ENCODE measurements at regions of chr14 and their contacts with region 1.

Region 1: GRCh38 chr14:34714320-34715126 is at the start of gene CFL2:
- DNase-seq: peak; percentile 54
- H3K4me3 Mint-ChIP-seq: peak within 1 kb of the TSS; percentile 86
- H3K27ac Mint-ChIP-seq: peak within 1 kb of the TSS; percentile 95
- H3K4me1 Mint-ChIP-seq: peaks cover 26% of the 10 kb centered on the region
- H3K27me3 Mint-ChIP-seq: no peaks in the 10 kb centered on the region
- CTCF ChIP-seq: no peak
- total RNA-seq, gene CFL2: 39.7 and 53.7 TPM in 2 replicates

Region 2: GRCh38 chr14:34554540-34555333 is 159.8 kb before region 1 on chr14:
- CTCF ChIA-PET with region 1: no interaction called
- POLR2A ChIA-PET with region 1: no interaction called
- intact Hi-C with region 1: loop called (anchors 5 kb)
- DNase-seq: peak; percentile 12
- H3K4me3 Mint-ChIP-seq: peak overlapping the region; percentile 62
- H3K27ac Mint-ChIP-seq: peak overlapping the region; percentile 44
- H3K4me1 Mint-ChIP-seq: peaks cover 10% of the 10 kb centered on the region
- H3K27me3 Mint-ChIP-seq: no peaks in the 10 kb centered on the region
- CTCF ChIP-seq: no peak

Region 3: GRCh38 chr14:34671716-34672115 is 42.8 kb before region 1 on chr14:
- CTCF ChIA-PET with region 1: interaction called, 40 read pairs
- POLR2A ChIA-PET with region 1: interaction called, 4 read pairs
- intact Hi-C with region 1: loop called (anchors 5 kb)
- DNase-seq: no peak
- H3K4me3 Mint-ChIP-seq: no peak overlapping the region
- H3K27ac Mint-ChIP-seq: no peak overlapping the region
- H3K4me1 Mint-ChIP-seq: no peaks in the 10 kb centered on the region
- H3K27me3 Mint-ChIP-seq: no peaks in the 10 kb centered on the region
- CTCF ChIP-seq: no peak

Region 4: DNA sequence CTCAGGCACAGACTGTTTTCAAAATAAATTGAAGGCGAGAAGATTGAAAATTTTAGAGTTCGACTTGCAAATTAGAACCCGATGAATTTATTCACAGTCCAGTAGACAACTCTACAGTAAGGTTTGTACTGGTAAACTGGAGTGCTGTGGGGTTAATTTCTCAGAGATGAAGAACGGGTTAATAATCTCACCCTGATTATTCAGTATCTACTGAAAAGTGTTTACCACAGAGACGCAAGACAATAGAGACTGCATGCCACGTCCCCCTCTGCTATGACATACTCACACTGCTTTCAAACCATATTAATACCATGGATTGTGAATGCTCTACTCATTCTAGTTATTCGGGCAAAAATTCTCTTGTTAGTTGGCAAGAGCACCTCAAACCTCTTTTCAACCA is 36.2 kb before region 1 on chr14:
- CTCF ChIA-PET with region 1: interaction called, 40 read pairs
- POLR2A ChIA-PET with region 1: interaction called, 4 read pairs
- intact Hi-C with region 1: loop called (anchors 5 kb)
- DNase-seq: no peak
- H3K4me3 Mint-ChIP-seq: peak overlapping the region; percentile 7
- H3K27ac Mint-ChIP-seq: peak overlapping the region; percentile 56
- H3K4me1 Mint-ChIP-seq: peaks cover 10% of the 10 kb centered on the region
- H3K27me3 Mint-ChIP-seq: no peaks in the 10 kb centered on the region
- CTCF ChIP-seq: no peak

Region 5: DNA sequence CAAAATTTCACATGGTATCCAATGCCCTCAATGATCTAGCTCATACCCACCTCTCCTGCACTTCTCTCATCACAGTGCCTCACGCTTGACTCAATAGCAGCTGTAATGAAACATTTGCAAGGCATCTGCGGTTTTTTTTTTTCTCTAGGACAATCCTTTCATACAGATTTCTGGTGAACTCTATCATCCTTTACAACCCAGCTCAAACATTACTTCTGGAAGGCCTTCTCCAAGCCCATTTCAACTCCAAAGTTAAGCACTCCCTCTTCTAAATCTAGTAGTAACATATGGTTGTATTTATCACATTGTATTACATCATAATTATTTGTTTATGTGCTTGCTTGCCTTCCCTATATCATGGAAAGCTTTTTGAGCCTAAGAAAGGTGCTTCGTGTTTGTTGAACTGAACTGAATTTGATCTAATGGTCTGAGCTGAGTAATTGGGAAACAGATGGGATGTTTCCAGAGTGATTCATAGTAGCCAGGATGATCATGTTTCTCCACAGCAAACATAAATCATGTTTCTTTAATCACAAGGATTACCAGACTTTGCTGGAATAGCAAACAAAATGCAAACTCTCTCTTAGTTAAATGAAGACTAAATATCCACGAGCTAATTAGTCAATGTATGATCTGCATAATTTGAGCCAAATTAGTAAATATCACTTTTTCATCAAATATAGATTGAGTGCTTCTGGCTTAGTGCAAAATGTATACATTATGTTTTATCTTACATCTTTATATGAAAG is 14.5 kb before region 1 on chr14:
- CTCF ChIA-PET with region 1: interaction called, 4 read pairs
- POLR2A ChIA-PET with region 1: interaction called, 92 read pairs
- intact Hi-C with region 1: no loop called
- DNase-seq: peak; percentile 80
- H3K4me3 Mint-ChIP-seq: peak overlapping the region; percentile 37
- H3K27ac Mint-ChIP-seq: peak overlapping the region; percentile 77
- H3K4me1 Mint-ChIP-seq: peaks cover 15% of the 10 kb centered on the region
- H3K27me3 Mint-ChIP-seq: no peaks in the 10 kb centered on the region
- CTCF ChIP-seq: no peak

Measured in MCF 10A (cell line).